ENCODE measurements at regions of chr1 and their contacts with region 1.

Region 1: DNA sequence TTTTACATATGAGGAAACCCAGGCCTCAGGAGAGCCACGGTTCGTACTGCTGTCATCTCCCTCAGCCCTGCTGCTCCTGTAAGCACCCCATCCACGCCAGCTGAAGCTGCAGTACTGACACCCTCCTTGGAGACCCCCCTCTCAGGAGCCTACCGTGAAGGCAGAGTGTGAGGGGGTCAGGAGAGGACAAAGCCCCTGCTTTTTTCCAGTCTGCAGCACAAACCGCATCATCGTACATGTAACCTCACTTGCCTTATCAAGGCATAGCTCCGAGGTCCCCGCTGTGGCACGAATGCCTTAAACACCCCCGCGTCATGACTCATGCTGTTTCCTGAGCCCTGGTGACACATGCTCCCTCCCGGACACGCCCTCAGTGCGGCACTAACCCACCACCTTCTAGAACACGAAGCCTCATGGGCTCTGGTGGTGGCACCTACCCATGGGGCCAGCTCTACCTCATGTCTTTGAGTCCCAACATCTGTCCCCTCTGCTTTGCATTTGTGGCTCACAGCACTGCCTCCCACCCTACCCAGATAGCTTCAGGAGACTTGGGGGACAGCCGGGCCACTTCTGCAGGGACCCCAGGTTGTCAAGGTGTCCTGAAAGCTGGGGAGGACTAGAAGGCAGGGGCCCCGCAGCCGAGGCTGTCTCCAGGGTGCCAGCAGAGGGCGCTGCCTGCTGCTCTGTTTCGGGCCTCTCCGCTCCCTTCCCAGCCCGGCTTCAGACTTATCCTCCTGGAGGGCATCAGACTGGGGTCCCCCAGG is 4.9 kb downstream of the SH3BGRL3 start:
- DNase-seq: peak; percentile 67 to 74
- H3K4me3 ChIP-seq: no peak overlapping the region
- H3K4me3 Mint-ChIP-seq: no peak overlapping the region
- H3K27ac Mint-ChIP-seq: peak overlapping the region; percentile 51
- H3K4me1 ChIP-seq: peaks cover 13% of the 10 kb centered on the region
- H3K4me1 Mint-ChIP-seq: peaks cover 17% of the 10 kb centered on the region
- H3K27me3 ChIP-seq: no peaks in the 10 kb centered on the region
- H3K27me3 Mint-ChIP-seq: no peaks in the 10 kb centered on the region
- CTCF ChIP-seq: peak; percentile 58 to 79

Region 2: GRCh38 chr1:26218906-26219494 is 65.8 kb before region 1 on chr1:
- CTCF ChIA-PET with region 1: no interaction called
- POLR2A ChIA-PET with region 1: no interaction called
- intact Hi-C with region 1: no loop called
- DNase-seq: no peak
- H3K4me3 ChIP-seq: no peak overlapping the region
- H3K4me3 Mint-ChIP-seq: no peak overlapping the region
- H3K27ac Mint-ChIP-seq: no peak overlapping the region
- H3K4me1 ChIP-seq: no peaks in the 10 kb centered on the region
- H3K4me1 Mint-ChIP-seq: no peaks in the 10 kb centered on the region
- H3K27me3 ChIP-seq: no peaks in the 10 kb centered on the region
- H3K27me3 Mint-ChIP-seq: no peaks in the 10 kb centered on the region
- CTCF ChIP-seq: no peak

Region 3: DNA sequence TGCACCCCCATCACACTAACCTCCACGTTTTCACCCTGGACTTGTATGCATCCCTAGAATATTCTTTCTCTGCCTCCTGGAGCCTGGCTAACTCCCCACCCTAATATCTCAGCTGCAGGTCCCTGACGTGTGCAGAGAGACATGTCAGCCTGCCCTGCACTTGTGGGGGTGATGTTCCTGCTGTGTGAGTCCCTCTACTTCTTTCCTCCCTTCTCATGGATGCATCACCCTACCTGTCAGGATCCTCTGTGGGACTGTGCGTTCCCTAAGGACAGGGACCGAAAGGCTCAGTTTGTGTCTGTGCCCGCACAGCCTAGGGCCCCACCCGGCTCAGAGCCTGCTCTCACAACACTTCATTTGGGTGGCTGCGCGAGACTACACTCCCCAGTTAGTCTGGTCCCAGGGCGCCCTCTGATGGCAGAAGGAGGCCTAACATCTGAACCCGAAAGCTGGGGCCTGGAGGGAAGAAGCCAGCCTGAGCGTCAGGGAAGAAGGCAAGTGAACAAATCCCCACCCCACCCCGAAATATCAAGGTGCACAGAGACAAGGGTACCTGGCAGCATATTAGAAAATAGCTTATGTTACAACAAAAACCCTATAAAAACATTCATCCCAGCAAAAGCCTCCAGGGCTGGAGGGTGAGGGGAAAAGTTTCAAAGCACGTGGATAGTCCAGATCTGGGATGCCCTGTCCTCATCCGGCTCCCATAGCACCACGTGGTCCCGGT is 36.7 kb after region 1 on chr1:
- CTCF ChIA-PET with region 1: interaction called, 8 read pairs
- POLR2A ChIA-PET with region 1: no interaction called
- intact Hi-C with region 1: loop called (anchors 1 kb)
- DNase-seq: peak; percentile 77 to 83
- H3K4me3 ChIP-seq: no peak overlapping the region
- H3K4me3 Mint-ChIP-seq: no peak overlapping the region
- H3K27ac Mint-ChIP-seq: peak overlapping the region; percentile 14
- H3K4me1 ChIP-seq: no peaks in the 10 kb centered on the region
- H3K4me1 Mint-ChIP-seq: no peaks in the 10 kb centered on the region
- H3K27me3 ChIP-seq: no peaks in the 10 kb centered on the region
- H3K27me3 Mint-ChIP-seq: no peaks in the 10 kb centered on the region
- CTCF ChIP-seq: peak; percentile 72

Region 4: GRCh38 chr1:26363549-26364448 is 79.0 kb after region 1 on chr1:
- CTCF ChIA-PET with region 1: interaction called, 5 read pairs
- POLR2A ChIA-PET with region 1: no interaction called
- intact Hi-C with region 1: loop called (anchors 1 kb)
- DNase-seq: peak; percentile 68 to 85
- H3K4me3 ChIP-seq: no peak overlapping the region
- H3K4me3 Mint-ChIP-seq: no peak overlapping the region
- H3K27ac Mint-ChIP-seq: no peak overlapping the region
- H3K4me1 ChIP-seq: peaks cover 14% of the 10 kb centered on the region
- H3K4me1 Mint-ChIP-seq: peaks cover 17% of the 10 kb centered on the region
- H3K27me3 ChIP-seq: no peaks in the 10 kb centered on the region
- H3K27me3 Mint-ChIP-seq: no peaks in the 10 kb centered on the region
- CTCF ChIP-seq: peak; percentile 90

Region 5: DNA sequence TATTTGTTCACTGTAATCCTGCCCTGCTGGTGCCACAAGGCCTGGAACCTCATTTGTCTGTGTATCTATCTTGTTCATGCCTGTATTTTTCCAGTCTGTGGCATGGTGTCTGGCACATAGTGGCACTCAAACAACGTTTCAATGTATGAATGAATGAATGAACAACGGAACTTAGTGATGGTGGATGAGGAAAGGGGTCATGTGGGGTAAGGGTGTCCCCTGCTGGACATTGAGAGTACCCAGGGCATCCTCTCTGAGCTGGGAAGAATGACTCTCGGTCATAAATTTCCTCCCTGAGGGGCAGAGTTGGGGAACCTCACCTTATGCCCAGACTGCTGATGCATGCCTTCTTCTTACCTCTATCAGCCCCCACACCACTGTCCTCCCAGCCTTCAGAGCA is 106.7 kb after region 1 on chr1:
- CTCF ChIA-PET with region 1: interaction called, 15 read pairs
- POLR2A ChIA-PET with region 1: no interaction called
- intact Hi-C with region 1: loop called (anchors 1 kb)
- DNase-seq: peak in 1 of 2 experiments; percentile 55
- H3K4me3 ChIP-seq: no peak overlapping the region
- H3K4me3 Mint-ChIP-seq: no peak overlapping the region
- H3K27ac Mint-ChIP-seq: no peak overlapping the region
- H3K4me1 ChIP-seq: no peaks in the 10 kb centered on the region; the same call in 1 of the 2 replicates
- H3K4me1 Mint-ChIP-seq: peaks cover 7% of the 10 kb centered on the region
- H3K27me3 ChIP-seq: no peaks in the 10 kb centered on the region
- H3K27me3 Mint-ChIP-seq: no peaks in the 10 kb centered on the region
- CTCF ChIP-seq: peak; percentile 63 to 84

Region 6: DNA sequence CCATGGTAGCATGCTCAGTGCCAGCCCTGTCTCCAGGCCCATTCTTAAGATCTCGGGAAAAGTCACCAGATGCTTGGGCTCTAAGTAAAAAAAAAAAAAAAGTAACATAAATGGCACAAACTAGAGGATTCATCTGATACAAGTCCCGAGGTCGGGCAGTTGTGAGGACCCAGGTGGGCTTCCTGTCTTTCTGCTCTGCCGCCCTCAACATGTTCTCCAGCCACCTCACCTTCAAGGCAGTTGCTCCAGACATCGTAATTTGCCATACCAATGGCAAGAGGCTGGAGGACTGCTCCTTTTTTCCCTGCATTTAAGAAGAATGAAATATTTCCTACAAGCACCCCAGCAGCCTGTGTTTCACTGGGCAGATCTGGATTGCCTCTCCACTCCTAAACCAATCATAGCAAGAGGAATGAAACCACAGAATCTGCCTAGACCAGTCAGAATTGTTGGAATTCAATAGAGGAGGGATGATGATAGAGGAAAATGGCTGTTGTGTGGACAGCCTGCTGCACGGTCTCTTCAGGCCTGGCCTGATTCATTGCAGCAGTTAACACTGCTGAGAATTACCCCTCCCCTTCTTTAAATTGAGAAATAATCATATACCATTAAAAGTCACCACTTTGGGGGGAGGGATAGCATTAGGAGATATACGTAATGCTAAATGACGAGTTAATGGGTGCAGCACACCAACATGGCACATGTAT is 192.8 kb after region 1 on chr1:
- CTCF ChIA-PET with region 1: no interaction called
- POLR2A ChIA-PET with region 1: no interaction called
- intact Hi-C with region 1: no loop called
- DNase-seq: no peak
- H3K4me3 ChIP-seq: no peak overlapping the region
- H3K4me3 Mint-ChIP-seq: no peak overlapping the region
- H3K27ac Mint-ChIP-seq: no peak overlapping the region
- H3K4me1 ChIP-seq: peaks cover 15% of the 10 kb centered on the region
- H3K4me1 Mint-ChIP-seq: no peaks in the 10 kb centered on the region
- H3K27me3 ChIP-seq: no peaks in the 10 kb centered on the region
- H3K27me3 Mint-ChIP-seq: no peaks in the 10 kb centered on the region
- CTCF ChIP-seq: no peak

Region 7: GRCh38 chr1:26890467-26890796 is 605.7 kb after region 1 on chr1:
- CTCF ChIA-PET with region 1: no interaction called
- POLR2A ChIA-PET with region 1: no interaction called
- intact Hi-C with region 1: no loop called
- DNase-seq: no peak
- H3K4me3 ChIP-seq: peak overlapping the region; percentile 96
- H3K4me3 Mint-ChIP-seq: peak overlapping the region; percentile 88
- H3K27ac Mint-ChIP-seq: peak overlapping the region; percentile 90
- H3K4me1 ChIP-seq: no peaks in the 10 kb centered on the region
- H3K4me1 Mint-ChIP-seq: peaks cover 11% of the 10 kb centered on the region
- H3K27me3 ChIP-seq: no peaks in the 10 kb centered on the region
- H3K27me3 Mint-ChIP-seq: no peaks in the 10 kb centered on the region
- CTCF ChIP-seq: no peak